ENCODE measurements at regions of chr17 and their contacts with region 1.

Region 1: DNA sequence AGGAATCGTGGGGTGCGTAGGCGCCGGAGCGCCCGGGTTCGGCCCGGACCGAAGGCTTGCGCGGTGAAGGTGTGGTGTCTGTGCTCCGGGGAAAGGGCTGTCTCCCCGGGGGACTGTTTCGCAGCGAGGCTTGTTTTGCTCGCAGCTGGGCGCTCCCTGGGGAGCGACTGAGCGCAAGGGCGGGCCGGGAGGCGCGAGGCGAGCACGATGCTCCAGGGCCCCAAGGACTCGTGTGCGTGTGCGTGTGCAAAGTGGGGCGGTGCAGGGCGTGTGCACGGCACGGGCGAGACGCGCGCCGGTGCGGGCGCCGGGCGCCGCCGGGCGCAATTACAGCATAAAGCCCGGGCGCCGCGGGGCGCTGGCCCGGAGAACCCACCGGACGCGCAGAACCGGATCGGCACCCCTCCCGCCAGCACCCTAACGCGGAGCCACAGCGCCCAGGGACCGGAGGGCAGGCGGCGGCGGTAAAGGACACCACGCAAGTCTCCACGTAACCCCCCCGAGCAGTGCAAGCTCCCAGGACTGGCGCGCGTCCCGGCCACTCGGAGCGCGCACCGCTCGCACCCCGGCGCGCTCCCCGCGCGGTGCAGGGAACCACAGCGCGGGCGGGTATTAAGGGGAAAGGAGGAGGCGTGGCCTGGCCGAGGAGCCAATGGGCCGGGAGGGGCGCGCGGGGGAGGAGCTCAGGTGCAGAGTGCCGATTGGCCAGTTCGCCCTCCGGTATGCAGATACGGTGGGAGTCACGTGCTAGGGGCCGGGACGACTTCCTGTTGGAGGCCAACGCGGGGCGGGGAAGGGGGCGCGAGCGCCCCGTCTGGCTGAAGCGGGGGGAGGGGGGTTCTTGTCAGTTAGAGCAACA is at the start of gene TNRC6C:
- DNase-seq: peak; percentile 99 to 100 (median 100)
- ATAC-seq: peak; percentile 85
- H3K4me3 ChIP-seq: peak within 1 kb of the TSS; percentile 95
- H3K4me3 Mint-ChIP-seq: peak within 1 kb of the TSS; percentile 96
- H3K27ac ChIP-seq: peak within 1 kb of the TSS; percentile 44 to 76
- H3K27ac Mint-ChIP-seq: peak within 1 kb of the TSS; percentile 94
- H3K4me1 ChIP-seq: peaks cover 36% of the 10 kb centered on the region
- H3K4me1 Mint-ChIP-seq: peaks cover 44% of the 10 kb centered on the region
- H3K27me3 ChIP-seq: no peaks in the 10 kb centered on the region
- H3K27me3 Mint-ChIP-seq: no peaks in the 10 kb centered on the region
- CTCF ChIP-seq: no peak
- total RNA-seq, gene TNRC6C: 50.7 to 57.3 TPM

Region 2: GRCh38 chr17:77444984-77445759 is 512.9 kb before region 1 on chr17:
- CTCF ChIA-PET with region 1: no interaction called
- POLR2A ChIA-PET with region 1: interaction called, 25 read pairs
- intact Hi-C with region 1: no loop called
- DNase-seq: peak; percentile 72 to 97 (median 83)
- ATAC-seq: peak; percentile 68
- H3K4me3 ChIP-seq: peak overlapping the region; percentile 55
- H3K4me3 Mint-ChIP-seq: peak overlapping the region; percentile 89
- H3K27ac ChIP-seq: peak overlapping the region; percentile 73 to 98
- H3K27ac Mint-ChIP-seq: peak overlapping the region; percentile 93
- H3K4me1 ChIP-seq: peaks cover 100% of the 10 kb centered on the region
- H3K4me1 Mint-ChIP-seq: peaks cover 98% of the 10 kb centered on the region
- H3K27me3 ChIP-seq: no peaks in the 10 kb centered on the region
- H3K27me3 Mint-ChIP-seq: no peaks in the 10 kb centered on the region
- CTCF ChIP-seq: no peak

Region 3: DNA sequence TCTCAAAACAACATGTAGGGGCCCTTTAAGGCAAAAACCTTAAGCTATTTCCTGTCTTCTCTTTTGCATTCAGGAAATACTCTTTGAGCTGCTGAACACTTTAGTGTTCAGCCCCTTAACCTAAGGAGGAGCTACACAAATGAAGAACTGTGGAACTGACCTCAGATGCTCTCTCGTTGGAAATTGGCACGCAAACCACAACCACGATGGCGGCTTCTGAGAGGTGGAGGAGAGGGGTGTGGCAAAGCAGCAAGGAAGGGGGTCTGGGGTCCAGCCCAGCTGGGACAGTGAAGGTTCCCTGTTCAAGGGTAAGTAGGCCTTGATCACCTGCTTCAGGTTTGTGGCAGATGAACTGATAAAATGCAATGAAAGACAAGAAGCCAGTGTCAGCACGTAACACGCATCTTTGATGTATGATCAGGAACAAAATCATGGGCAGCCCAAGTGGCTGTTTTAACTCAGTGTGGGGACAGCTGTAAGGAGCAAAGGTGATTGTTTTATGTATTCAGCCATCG is 291.1 kb before region 1 on chr17:
- CTCF ChIA-PET with region 1: no interaction called
- POLR2A ChIA-PET with region 1: interaction called, 70 read pairs
- intact Hi-C with region 1: loop called in 1 of 2 experiments (anchors 5 kb)
- DNase-seq: peak; percentile 41 to 92 (median 58)
- ATAC-seq: peak; percentile 91
- H3K4me3 ChIP-seq: peak overlapping the region; percentile 58
- H3K4me3 Mint-ChIP-seq: peak overlapping the region; percentile 82
- H3K27ac ChIP-seq: peak overlapping the region; percentile 66 to 72
- H3K27ac Mint-ChIP-seq: peak overlapping the region; percentile 93
- H3K4me1 ChIP-seq: peaks cover 24% of the 10 kb centered on the region
- H3K4me1 Mint-ChIP-seq: peaks cover 53% of the 10 kb centered on the region
- H3K27me3 ChIP-seq: no peaks in the 10 kb centered on the region
- H3K27me3 Mint-ChIP-seq: no peaks in the 10 kb centered on the region
- CTCF ChIP-seq: no peak

Region 4: GRCh38 chr17:77869665-77870132 is 88.4 kb before region 1 on chr17:
- CTCF ChIA-PET with region 1: no interaction called
- POLR2A ChIA-PET with region 1: interaction called, 15 read pairs
- intact Hi-C with region 1: no loop called
- DNase-seq: peak in 4 of 14 experiments; percentile 34 to 76 (median 64)
- ATAC-seq: peak; percentile 22
- H3K4me3 ChIP-seq: no peak overlapping the region
- H3K4me3 Mint-ChIP-seq: peak overlapping the region; percentile 39
- H3K27ac ChIP-seq: no peak overlapping the region
- H3K27ac Mint-ChIP-seq: no peak overlapping the region
- H3K4me1 ChIP-seq: peaks cover 56% of the 10 kb centered on the region
- H3K4me1 Mint-ChIP-seq: peaks cover 47% of the 10 kb centered on the region
- H3K27me3 ChIP-seq: no peaks in the 10 kb centered on the region
- H3K27me3 Mint-ChIP-seq: no peaks in the 10 kb centered on the region
- CTCF ChIP-seq: no peak

Region 5: DNA sequence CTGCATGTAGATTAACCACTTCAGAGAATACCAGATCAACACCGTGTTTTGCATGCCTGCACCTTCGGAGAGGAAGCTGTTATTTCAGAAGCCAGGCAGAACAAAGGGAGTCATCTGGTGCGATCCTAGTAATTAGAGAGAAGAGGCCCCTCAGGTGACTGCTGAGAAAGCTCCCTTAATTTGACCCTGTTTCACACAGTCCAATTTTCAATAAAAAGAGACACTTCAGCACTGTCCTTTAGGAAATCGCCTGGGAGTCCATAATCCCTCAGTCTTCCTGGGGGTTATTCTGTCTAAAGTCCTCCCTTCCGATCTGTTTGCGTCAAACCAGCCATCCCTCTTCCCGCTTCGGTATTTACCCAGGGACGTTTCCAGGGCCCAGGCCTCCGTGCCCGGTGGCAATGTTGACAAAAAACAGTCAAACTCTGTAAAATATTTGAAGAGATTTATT is 22.9 kb before region 1 on chr17:
- CTCF ChIA-PET with region 1: no interaction called
- POLR2A ChIA-PET with region 1: interaction called, 40 read pairs
- intact Hi-C with region 1: no loop called
- DNase-seq: peak in 2 of 14 experiments; percentile 13 to 34
- ATAC-seq: peak; percentile 66
- H3K4me3 ChIP-seq: no peak overlapping the region
- H3K4me3 Mint-ChIP-seq: peak overlapping the region; percentile 2
- H3K27ac ChIP-seq: no peak overlapping the region
- H3K27ac Mint-ChIP-seq: no peak overlapping the region
- H3K4me1 ChIP-seq: peaks cover 6% of the 10 kb centered on the region
- H3K4me1 Mint-ChIP-seq: peaks cover 43% of the 10 kb centered on the region
- H3K27me3 ChIP-seq: no peaks in the 10 kb centered on the region
- H3K27me3 Mint-ChIP-seq: no peaks in the 10 kb centered on the region
- CTCF ChIP-seq: no peak

Region 6: DNA sequence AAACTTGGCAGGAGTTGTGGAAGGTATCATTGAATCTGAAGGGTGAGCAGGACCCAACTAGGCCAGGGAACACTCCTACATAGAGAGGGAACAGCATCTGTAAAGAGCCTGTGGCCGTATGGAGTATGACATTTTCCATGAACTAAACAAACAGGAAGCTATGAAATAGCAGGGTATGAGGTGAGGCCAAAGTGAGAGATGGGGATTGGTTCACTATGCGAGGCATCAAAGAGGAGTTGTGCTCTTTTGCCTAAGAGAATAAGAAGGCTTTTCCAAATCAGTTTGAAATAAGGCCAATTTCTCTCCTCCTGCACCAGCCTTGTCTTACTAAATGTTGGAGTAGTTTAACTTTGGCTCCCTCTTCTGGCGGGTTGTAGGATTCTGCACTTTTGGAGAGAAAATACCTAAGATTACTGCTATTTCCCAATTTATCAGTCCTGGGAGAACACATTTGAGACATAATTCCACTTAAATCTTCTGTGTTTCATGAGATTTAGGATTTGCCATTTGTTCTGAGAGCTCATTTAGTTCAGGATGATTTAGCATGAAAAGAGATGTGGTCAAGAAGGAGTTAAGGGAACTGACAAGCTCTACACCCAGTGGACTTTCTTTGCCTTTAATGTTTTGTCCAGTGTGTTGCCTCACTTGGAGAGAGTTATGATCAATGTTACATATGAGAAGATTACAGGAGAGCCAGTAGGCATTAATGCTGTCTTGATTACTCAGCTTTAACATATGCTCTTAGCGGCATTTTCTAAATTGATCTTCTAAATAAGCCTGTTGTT is 55.8 kb after region 1 on chr17:
- CTCF ChIA-PET with region 1: interaction called, 13 read pairs
- POLR2A ChIA-PET with region 1: interaction called, 56 read pairs
- intact Hi-C with region 1: loop called in 1 of 2 experiments (anchors 5 kb)
- DNase-seq: peak in 13 of 14 experiments; percentile 6 to 84 (median 42)
- ATAC-seq: peak; percentile 75
- H3K4me3 ChIP-seq: no peak overlapping the region
- H3K4me3 Mint-ChIP-seq: no peak overlapping the region
- H3K27ac ChIP-seq: no peak overlapping the region
- H3K27ac Mint-ChIP-seq: peak overlapping the region; percentile 34
- H3K4me1 ChIP-seq: peaks cover 4% of the 10 kb centered on the region
- H3K4me1 Mint-ChIP-seq: peaks cover 47% of the 10 kb centered on the region
- H3K27me3 ChIP-seq: no peaks in the 10 kb centered on the region
- H3K27me3 Mint-ChIP-seq: no peaks in the 10 kb centered on the region
- CTCF ChIP-seq: peak; percentile 88

Region 7: GRCh38 chr17:78089576-78090281 is 131.6 kb after region 1 on chr17:
- CTCF ChIA-PET with region 1: no interaction called
- POLR2A ChIA-PET with region 1: no interaction called
- intact Hi-C with region 1: no loop called
- DNase-seq: no peak
- ATAC-seq: no peak
- H3K4me3 ChIP-seq: no peak overlapping the region
- H3K4me3 Mint-ChIP-seq: no peak overlapping the region
- H3K27ac ChIP-seq: no peak overlapping the region
- H3K27ac Mint-ChIP-seq: peak overlapping the region; percentile 25
- H3K4me1 ChIP-seq: no peaks in the 10 kb centered on the region
- H3K4me1 Mint-ChIP-seq: no peaks in the 10 kb centered on the region
- H3K27me3 ChIP-seq: no peaks in the 10 kb centered on the region
- H3K27me3 Mint-ChIP-seq: no peaks in the 10 kb centered on the region
- CTCF ChIP-seq: no peak

Region 8: GRCh38 chr17:78661093-78661770 is 703.1 kb after region 1 on chr17:
- CTCF ChIA-PET with region 1: no interaction called
- POLR2A ChIA-PET with region 1: no interaction called
- intact Hi-C with region 1: no loop called
- DNase-seq: no peak
- ATAC-seq: no peak
- H3K4me3 ChIP-seq: no peak overlapping the region
- H3K4me3 Mint-ChIP-seq: no peak overlapping the region
- H3K27ac ChIP-seq: no peak overlapping the region
- H3K27ac Mint-ChIP-seq: no peak overlapping the region
- H3K4me1 ChIP-seq: peaks cover 18% of the 10 kb centered on the region
- H3K4me1 Mint-ChIP-seq: peaks cover 14% of the 10 kb centered on the region
- H3K27me3 ChIP-seq: no peaks in the 10 kb centered on the region
- H3K27me3 Mint-ChIP-seq: no peaks in the 10 kb centered on the region
- CTCF ChIP-seq: no peak

Measured in CD4-positive, alpha-beta T cell (primary cell).